ENCODE measurements at regions of chr5 and their contacts with region 1.

Region 1: DNA sequence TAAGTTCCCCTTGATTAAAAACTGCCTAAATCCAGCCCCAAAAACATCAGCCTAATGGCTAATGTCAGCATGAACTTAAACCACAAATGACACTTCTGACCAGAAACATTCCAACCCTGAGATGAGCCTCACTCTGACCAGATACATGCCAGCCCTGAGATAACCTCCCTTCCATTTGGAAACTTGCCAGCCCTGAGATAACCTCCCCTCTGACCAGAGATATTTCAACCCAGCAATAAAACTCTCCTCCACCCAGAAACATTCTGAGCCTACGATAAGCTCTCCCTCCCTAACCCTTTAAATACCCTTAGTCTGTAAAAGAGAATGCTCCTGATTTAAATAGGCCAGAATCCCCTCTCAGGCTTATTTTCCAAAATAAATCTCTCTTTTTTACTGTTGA is 1035.7 kb upstream of the NUDT12 start:
- DNase-seq: no peak
- H3K4me3 ChIP-seq: no peak overlapping the region
- CTCF ChIP-seq: no peak
- POLR2A ChIP-seq: no peak

Region 2: DNA sequence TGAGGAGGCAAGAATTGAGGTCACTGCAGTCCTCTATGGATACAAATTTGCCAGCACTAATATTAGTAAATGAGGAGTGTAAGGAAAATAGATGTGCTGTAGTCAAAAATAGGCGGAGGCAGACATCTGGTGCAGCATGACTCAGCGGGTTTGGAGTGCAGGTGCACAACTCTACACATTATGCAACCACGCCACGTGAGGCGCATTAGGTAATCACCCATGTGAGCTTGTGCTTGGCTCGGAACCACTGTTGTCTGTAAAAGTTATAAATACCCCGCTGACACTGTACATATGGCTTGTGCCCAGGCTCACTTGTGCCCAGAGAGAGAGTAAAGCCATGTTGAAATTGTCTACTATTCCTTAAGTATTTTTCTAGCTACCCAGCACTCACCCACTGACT is 412.2 kb before region 1 on chr5:
- intact Hi-C with region 1: no loop called
- DNase-seq: peak; percentile 77 to 86
- H3K4me3 ChIP-seq: no peak overlapping the region
- CTCF ChIP-seq: no peak
- POLR2A ChIP-seq: no peak

Region 3: DNA sequence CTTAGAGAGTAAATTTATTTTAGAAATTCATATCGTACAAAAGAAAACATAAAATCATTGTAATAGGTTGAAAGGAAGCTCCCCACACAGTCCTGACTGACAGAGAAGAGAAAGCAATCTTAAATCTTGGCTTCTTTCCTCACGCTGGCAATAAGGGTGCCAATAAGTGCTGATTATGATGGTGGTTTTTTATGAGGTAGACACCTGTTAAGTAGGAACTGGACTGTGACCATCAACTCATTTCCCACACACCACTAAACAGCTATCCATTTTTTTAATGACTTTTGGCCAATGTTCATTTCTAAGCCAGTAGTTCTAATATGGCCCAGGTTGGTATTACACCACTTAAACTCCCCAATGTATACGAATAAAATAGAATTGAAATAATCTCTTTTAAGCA is 142.2 kb before region 1 on chr5:
- intact Hi-C with region 1: no loop called
- DNase-seq: no peak
- H3K4me3 ChIP-seq: no peak overlapping the region
- CTCF ChIP-seq: no peak
- POLR2A ChIP-seq: no peak

Region 4: GRCh38 chr5:104626122-104626521 is 27.8 kb after region 1 on chr5:
- intact Hi-C with region 1: loop called (anchors 1 kb)
- DNase-seq: no peak
- H3K4me3 ChIP-seq: no peak overlapping the region
- CTCF ChIP-seq: no peak
- POLR2A ChIP-seq: no peak